ENCODE measurements at regions of chr7 and their contacts with region 1.

Region 1: DNA sequence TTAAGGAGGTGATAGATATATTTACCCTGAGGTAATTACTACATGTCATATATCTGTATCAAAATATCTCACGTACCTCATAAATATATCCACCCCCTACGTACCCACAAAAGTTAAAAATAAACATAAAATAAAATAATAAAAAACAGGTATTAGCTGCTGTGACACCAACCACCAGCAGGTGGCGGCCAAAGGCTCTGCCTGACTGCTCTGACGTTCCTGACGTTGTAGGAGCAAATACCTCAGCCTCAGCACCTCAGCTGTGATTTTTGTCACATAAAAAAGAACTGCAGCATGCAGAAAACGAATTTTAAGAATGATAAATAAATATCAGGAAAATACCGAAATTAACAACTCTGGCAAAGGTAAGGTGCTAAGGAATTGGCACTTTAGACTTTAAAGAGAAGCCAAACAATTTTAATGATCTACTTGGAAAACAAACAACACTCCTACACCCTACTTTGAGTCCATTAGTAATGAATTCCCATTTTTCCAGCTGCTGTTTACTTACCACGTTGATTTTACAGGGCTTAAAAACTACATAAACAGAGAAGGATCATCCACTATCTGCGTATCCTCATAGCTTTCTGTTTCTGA is 125.4 kb upstream of the TARP start:
- DNase-seq: peak; percentile 22
- ATAC-seq: peak; percentile 78
- H3K4me3 Mint-ChIP-seq: no peak overlapping the region
- H3K27ac Mint-ChIP-seq: no peak overlapping the region
- H3K4me1 Mint-ChIP-seq: peaks cover 21% of the 10 kb centered on the region
- H3K27me3 Mint-ChIP-seq: no peaks in the 10 kb centered on the region
- CTCF ChIP-seq: peak; percentile 100

Region 2: DNA sequence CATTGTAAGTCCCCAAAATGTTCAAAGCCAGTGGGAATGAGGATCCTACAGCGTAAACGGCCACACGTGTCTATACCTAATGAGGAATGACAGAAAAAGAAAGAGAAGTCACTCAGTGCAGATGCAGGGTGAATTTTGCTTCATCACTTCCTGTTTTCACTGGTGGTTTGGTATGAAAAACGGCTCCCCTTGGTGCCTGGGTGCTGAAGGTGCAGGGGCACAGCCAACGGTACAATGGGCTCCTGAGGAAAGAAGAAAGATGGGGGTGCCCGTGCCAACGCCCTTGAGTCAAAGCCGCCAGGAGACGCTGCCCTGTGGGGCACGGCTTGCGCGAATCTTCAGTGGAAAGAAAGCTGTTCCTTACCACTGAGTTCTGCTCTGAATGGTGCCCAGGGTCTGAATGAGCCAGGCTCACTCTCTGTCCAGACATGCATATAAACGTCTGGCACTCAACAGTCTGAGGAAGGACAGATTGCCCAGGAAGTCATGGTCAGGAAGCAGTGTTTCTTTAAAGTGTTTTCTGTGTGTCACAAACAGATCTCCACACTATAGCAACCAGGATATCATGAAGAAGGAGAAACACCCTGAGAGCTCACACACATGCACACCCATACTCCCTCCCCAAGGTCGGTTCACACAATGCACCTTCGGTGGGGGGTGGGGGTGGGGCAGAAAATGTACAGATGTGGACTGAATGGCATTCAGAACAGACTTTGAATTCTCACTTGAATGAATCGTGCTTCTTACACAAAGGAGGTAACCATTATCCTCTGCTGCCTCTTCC is 1055.9 kb before region 1 on chr7:
- CTCF ChIA-PET with region 1: no interaction called
- POLR2A ChIA-PET with region 1: no interaction called
- intact Hi-C with region 1: no loop called
- DNase-seq: peak; percentile 59
- ATAC-seq: peak; percentile 86
- H3K4me3 Mint-ChIP-seq: peak overlapping the region; percentile 98
- H3K27ac Mint-ChIP-seq: peak overlapping the region; percentile 98
- H3K4me1 Mint-ChIP-seq: peaks cover 85% of the 10 kb centered on the region
- H3K27me3 Mint-ChIP-seq: no peaks in the 10 kb centered on the region
- CTCF ChIP-seq: no peak

Region 3: DNA sequence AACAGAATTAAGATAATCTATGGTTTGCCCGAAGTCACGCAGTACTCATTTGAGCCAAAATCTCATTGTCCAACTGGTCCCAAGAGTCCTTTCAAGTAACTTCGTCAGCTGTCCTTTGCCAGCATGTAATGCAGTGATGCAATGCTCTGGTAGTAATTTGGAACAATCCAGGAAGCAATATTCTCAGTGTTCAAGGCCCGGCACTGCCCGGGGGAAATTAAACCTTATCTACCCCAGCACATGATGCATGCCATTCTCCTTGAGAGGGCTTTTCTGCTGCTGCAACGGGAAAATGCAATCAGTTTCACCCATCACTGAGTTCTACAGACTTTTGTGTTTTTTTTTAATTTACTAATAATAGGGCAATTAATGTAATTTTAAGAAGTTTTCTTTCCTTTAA is 628.0 kb before region 1 on chr7:
- CTCF ChIA-PET with region 1: no interaction called
- POLR2A ChIA-PET with region 1: no interaction called
- intact Hi-C with region 1: no loop called
- DNase-seq: no peak
- ATAC-seq: no peak
- H3K4me3 Mint-ChIP-seq: no peak overlapping the region
- H3K27ac Mint-ChIP-seq: no peak overlapping the region
- H3K4me1 Mint-ChIP-seq: peaks cover 8% of the 10 kb centered on the region
- H3K27me3 Mint-ChIP-seq: no peaks in the 10 kb centered on the region
- CTCF ChIP-seq: no peak

Region 4: DNA sequence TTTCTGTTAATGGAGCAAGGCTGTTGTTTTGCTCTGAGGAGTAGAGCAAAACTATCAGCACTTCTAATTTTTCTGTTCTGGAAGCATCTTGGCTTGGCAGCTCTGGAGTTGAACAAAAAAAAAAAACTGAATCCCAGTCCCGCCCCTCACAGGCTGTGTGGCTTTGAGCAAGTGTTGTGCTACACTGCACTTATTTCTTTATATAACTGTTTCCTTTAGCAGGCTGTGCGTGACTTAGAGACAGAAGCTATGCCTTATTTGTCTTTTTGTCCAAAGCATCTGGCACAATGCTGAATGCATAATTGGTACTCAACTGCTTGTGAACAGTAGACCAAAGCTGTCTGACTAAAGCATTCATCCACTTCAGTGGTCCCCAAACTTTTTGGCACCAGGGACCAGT is 136.2 kb after region 1 on chr7:
- CTCF ChIA-PET with region 1: no interaction called
- POLR2A ChIA-PET with region 1: no interaction called
- intact Hi-C with region 1: loop called (anchors 5 kb)
- DNase-seq: no peak
- ATAC-seq: no peak
- H3K4me3 Mint-ChIP-seq: no peak overlapping the region
- H3K27ac Mint-ChIP-seq: no peak overlapping the region
- H3K4me1 Mint-ChIP-seq: no peaks in the 10 kb centered on the region
- H3K27me3 Mint-ChIP-seq: peaks cover 2% of the 10 kb centered on the region
- CTCF ChIP-seq: no peak

Region 5: GRCh38 chr7:38660427-38661099 is 261.7 kb after region 1 on chr7:
- CTCF ChIA-PET with region 1: interaction called, 32 read pairs
- POLR2A ChIA-PET with region 1: no interaction called
- intact Hi-C with region 1: loop called (anchors 1 kb)
- DNase-seq: no peak
- ATAC-seq: peak; percentile 67
- H3K4me3 Mint-ChIP-seq: no peak overlapping the region
- H3K27ac Mint-ChIP-seq: no peak overlapping the region
- H3K4me1 Mint-ChIP-seq: no peaks in the 10 kb centered on the region
- H3K27me3 Mint-ChIP-seq: peaks cover 17% of the 10 kb centered on the region
- CTCF ChIP-seq: no peak

Region 6: GRCh38 chr7:38748056-38748611 is 349.3 kb after region 1 on chr7:
- CTCF ChIA-PET with region 1: interaction called, 3 read pairs
- POLR2A ChIA-PET with region 1: no interaction called
- intact Hi-C with region 1: loop called (anchors 1 kb)
- DNase-seq: no peak
- ATAC-seq: no peak
- H3K4me3 Mint-ChIP-seq: no peak overlapping the region
- H3K27ac Mint-ChIP-seq: no peak overlapping the region
- H3K4me1 Mint-ChIP-seq: no peaks in the 10 kb centered on the region
- H3K27me3 Mint-ChIP-seq: no peaks in the 10 kb centered on the region
- CTCF ChIP-seq: no peak

Region 7: GRCh38 chr7:39465055-39465929 is 1066.5 kb after region 1 on chr7:
- CTCF ChIA-PET with region 1: no interaction called
- POLR2A ChIA-PET with region 1: no interaction called
- intact Hi-C with region 1: loop called (anchors 1 kb)
- DNase-seq: no peak
- ATAC-seq: peak; percentile 50
- H3K4me3 Mint-ChIP-seq: no peak overlapping the region
- H3K27ac Mint-ChIP-seq: no peak overlapping the region
- H3K4me1 Mint-ChIP-seq: peaks cover 4% of the 10 kb centered on the region
- H3K27me3 Mint-ChIP-seq: peaks cover 8% of the 10 kb centered on the region
- CTCF ChIP-seq: peak; percentile 60

Region 8: DNA sequence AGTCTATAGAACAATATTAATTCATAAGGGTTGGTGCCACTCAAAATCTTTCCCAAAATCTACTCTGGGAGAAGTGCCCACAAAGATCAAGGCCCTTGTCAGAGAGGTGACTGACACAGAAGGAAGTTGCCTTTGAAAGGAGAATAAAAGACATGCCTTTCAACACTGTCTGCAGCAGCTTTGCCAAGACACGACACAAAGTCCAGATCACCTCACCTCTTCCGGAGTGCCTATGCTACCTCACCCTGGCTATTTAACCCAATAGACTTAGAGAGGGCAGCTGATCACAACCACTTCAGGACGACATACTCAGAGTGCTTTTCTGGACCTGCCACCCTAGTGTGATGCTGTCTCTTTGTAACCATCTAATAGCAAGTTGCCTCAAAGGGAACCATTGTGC is 1118.4 kb after region 1 on chr7:
- CTCF ChIA-PET with region 1: interaction called, 7 read pairs
- POLR2A ChIA-PET with region 1: no interaction called
- intact Hi-C with region 1: loop called (anchors 1 kb)
- DNase-seq: no peak
- ATAC-seq: no peak
- H3K4me3 Mint-ChIP-seq: no peak overlapping the region
- H3K27ac Mint-ChIP-seq: no peak overlapping the region
- H3K4me1 Mint-ChIP-seq: peaks cover 4% of the 10 kb centered on the region
- H3K27me3 Mint-ChIP-seq: peaks cover 10% of the 10 kb centered on the region
- CTCF ChIP-seq: no peak